Dendritic cell treated with granulocyte-macrophage colony-stimulating factor and Interleukin-4, amounts not matched to agents 40 ng/mL and 50 ng/mL, for 4 days (primary cell): ENCODE measurements at regions of chr9 and their contacts with region 1.

Region 1: DNA sequence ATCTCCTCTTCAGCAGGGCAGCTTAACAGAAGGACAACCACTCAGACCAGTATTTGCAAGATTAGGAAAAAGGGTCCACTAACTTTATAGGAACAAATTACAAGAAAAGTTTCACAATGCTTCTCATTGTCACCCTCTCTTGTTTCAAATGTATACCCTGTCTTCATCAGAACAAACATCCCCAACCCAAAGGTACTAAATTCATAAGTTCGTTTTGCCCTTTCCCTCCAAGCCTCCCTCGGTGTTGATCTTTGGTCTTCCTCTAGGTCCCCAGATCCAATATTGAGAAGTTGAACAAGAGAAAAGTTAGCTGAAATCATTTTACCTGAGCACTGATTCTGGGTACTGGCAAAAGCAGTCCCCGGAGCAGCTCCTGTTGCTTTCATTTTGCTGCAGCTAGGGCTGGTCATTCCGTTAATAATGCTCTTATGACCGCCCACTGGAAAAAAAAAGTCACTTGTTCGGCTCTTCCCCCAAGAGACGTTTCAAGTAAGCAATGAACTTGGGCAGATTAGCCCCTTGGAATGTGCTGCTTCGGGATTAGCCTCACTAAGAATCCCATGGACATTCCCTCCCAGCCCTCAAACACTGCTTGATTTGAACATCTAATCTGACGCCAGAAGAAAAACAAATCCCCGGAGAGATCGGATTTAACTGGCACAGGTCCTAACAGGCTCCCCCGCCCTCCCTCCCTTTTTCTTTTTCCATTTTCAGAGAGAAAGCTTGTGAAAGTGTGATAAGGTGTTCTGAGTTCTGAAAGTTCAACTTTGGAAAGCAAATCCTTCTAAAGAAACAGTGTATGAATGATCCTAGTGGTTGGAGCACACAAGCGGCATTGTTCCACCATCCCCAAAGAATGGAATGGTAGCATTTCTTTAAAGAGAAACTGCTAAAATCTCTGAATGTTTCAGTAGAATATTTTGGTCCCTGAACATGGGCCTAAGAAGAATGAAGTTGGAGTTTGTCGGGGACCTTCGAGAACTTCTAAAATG is 252.5 kb downstream of the TRPM3 start:
- H3K4me3 Mint-ChIP-seq: no peak overlapping the region
- H3K27ac Mint-ChIP-seq: no peak overlapping the region
- H3K4me1 Mint-ChIP-seq: peaks cover 5% of the 10 kb centered on the region
- H3K27me3 Mint-ChIP-seq: no peaks in the 10 kb centered on the region

Region 2: DNA sequence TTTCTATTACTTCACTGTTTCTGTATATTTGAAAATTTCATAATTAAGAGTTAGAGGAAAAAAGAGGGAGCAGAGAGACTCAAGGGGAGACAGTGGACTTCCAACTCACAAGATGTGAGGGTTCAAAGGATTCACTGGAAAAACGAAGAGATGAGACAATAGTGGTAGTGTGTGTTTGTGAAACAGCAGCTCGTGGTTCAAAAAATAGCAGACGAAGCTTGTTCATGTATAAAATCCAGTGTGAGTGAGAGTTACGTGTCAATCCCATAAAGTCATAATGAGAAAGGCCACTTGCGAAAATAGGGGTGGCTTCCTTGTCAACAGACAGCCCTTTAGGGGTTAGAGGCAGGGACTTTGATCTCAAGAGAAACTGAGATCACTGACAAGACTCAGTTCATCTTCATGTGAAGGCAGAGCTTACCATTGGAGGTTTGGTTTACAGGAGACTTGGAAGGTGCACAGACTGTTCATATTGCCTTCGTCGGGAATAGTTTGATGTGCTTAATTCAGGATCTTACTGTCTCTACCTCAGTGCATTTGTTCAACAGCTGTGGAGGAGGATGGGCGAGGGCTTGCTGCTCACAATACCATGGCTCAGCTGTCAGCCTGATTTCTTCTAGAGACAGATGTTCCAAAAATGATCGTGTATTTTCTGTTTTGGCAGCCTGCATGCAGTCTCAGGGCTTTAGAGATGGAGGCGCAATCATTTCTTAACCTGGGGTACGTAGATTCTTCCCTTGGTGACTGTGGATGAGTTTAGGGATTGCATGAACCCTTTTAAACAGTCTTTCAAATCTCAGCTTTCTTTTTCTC is 348.8 kb before region 1 on chr9:
- intact Hi-C with region 1: loop called (anchors 10 kb)
- H3K4me3 Mint-ChIP-seq: no peak overlapping the region
- H3K27ac Mint-ChIP-seq: no peak overlapping the region
- H3K4me1 Mint-ChIP-seq: peaks cover 4% of the 10 kb centered on the region
- H3K27me3 Mint-ChIP-seq: no peaks in the 10 kb centered on the region